ENCODE measurements at regions of chr1 and their contacts with region 1.

Region 1: DNA sequence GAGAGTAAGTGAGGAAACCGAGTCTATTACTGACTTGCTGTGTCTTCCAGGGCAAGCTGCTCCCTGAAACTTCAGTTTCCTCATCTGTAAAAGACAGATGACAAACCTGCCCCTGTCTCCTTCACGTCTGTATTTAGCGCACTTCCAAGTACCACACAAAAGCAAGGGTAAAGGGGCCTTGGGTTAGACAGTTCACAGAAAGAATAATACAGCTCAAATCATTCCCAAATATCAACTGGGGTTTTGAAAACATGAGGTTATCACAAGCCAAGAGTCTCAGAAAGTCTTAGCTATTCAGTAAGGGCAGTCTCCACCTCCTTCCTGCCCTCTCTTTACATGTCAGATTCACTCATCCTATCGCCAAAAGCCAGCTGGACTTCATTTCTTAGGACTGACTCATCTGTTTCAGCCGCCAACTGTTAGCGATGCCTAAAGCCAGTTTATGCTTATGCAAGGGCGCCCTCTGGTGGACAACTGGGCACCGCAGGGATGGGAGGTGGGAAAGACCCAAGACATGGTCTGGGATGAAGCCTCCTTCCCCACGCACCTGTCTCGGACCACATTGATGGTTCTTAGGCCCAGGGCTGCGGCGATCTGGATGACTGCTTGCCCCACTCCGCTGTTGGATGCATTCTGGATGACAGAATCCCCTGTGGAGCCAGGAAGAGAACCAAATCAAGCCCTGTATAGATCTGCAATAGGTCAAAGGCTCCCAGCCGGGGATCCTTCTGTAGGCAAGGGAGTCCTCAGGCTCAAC is 21.1 kb upstream of the SRSF4 start:
- DNase-seq: peak; percentile 86 to 92
- ATAC-seq: peak; percentile 92 to 98 (median 96)
- H3K4me3 ChIP-seq: no peak overlapping the region
- H3K4me3 Mint-ChIP-seq: no peak overlapping the region
- H3K27ac ChIP-seq: no peak overlapping the region
- H3K27ac Mint-ChIP-seq: peak overlapping the region in 1 of 2 donors; percentile 31
- H3K4me1 ChIP-seq: no peaks in the 10 kb centered on the region
- H3K4me1 Mint-ChIP-seq: peaks cover 0 to 4% of the 10 kb centered on the region in 2 donors
- H3K27me3 ChIP-seq: no peaks in the 10 kb centered on the region
- H3K27me3 Mint-ChIP-seq: no peaks in the 10 kb centered on the region
- CTCF ChIP-seq: peak; percentile 97

Region 2: GRCh38 chr1:28779751-28780408 is 422.9 kb before region 1 on chr1:
- intact Hi-C with region 1: loop called (anchors 1 kb)
- DNase-seq: no peak
- ATAC-seq: no peak
- H3K4me3 ChIP-seq: no peak overlapping the region
- H3K4me3 Mint-ChIP-seq: no peak overlapping the region
- H3K27ac ChIP-seq: no peak overlapping the region
- H3K27ac Mint-ChIP-seq: no peak overlapping the region
- H3K4me1 ChIP-seq: peaks cover 7% of the 10 kb centered on the region
- H3K4me1 Mint-ChIP-seq: peaks cover 9 to 10% of the 10 kb centered on the region in 2 donors
- H3K27me3 ChIP-seq: no peaks in the 10 kb centered on the region
- H3K27me3 Mint-ChIP-seq: no peaks in the 10 kb centered on the region
- CTCF ChIP-seq: no peak

Region 3: GRCh38 chr1:29033829-29034466 is 168.8 kb before region 1 on chr1:
- intact Hi-C with region 1: loop called (anchors 2 kb)
- DNase-seq: peak in 1 of 2 donors; percentile 65
- ATAC-seq: peak; percentile 69 to 85 (median 69)
- H3K4me3 ChIP-seq: no peak overlapping the region
- H3K4me3 Mint-ChIP-seq: no peak overlapping the region
- H3K27ac ChIP-seq: no peak overlapping the region
- H3K27ac Mint-ChIP-seq: peak overlapping the region; percentile 60 to 77
- H3K4me1 ChIP-seq: no peaks in the 10 kb centered on the region
- H3K4me1 Mint-ChIP-seq: peaks cover 4 to 7% of the 10 kb centered on the region in 2 donors
- H3K27me3 ChIP-seq: no peaks in the 10 kb centered on the region
- H3K27me3 Mint-ChIP-seq: no peaks in the 10 kb centered on the region
- CTCF ChIP-seq: peak; percentile 78

Region 4: GRCh38 chr1:29124366-29125236 is 78.2 kb before region 1 on chr1:
- intact Hi-C with region 1: loop called (anchors 2 kb)
- DNase-seq: peak; percentile 62 to 65
- ATAC-seq: peak; percentile 64 to 67 (median 66)
- H3K4me3 ChIP-seq: peak overlapping the region; percentile 42
- H3K4me3 Mint-ChIP-seq: peak overlapping the region; percentile 92
- H3K27ac ChIP-seq: no peak overlapping the region
- H3K27ac Mint-ChIP-seq: peak overlapping the region in 1 of 2 donors; percentile 76
- H3K4me1 ChIP-seq: peaks cover 38% of the 10 kb centered on the region
- H3K4me1 Mint-ChIP-seq: peaks cover 8 to 18% of the 10 kb centered on the region in 2 donors
- H3K27me3 ChIP-seq: peaks cover 23% of the 10 kb centered on the region
- H3K27me3 Mint-ChIP-seq: peaks cover 8 to 15% of the 10 kb centered on the region in 2 donors
- CTCF ChIP-seq: no peak

Region 5: DNA sequence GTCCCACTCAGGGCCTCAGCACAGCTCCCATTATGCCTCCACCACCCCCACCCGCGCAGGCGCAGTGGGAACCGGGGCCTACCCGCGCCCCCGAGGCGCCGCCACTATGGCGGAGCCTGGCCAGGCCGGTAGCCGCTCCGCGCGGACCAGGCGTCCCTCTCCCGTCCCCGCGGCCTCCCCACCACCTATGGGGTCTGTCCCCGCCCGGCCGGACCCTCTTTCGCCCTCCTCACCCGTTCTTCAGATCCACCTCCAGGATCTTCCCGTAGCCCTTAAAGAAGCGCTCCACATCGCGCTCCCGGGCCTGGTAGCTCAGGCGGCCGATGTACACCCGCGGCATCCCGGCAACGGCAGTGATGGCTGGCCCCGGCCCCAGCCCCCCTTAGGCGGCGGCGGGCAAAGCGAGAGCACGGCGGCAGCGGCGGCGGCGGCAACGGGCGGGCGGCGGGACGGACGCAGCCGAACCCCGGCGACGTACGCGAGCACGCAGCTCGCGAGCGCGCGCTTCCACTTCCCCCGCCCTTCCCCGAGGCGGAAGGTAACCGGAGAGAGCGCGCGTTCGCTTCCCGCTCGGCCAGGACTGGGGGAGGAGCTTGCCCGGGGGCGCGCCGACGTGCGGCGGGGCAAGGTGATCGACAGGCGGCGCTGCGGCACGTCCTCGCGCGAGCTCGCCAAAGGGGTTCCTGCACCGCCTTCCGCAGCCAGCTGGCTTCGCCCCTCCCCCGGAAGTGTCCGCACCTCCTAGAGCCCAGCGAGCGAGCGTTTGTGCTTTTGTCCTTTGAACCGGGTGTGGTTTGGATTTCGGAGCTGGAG is 21.1 kb before region 1 on chr1 and contains the start of gene SRSF4:
- intact Hi-C with region 1: loop called (anchors 2 kb)
- DNase-seq: peak; percentile 99
- ATAC-seq: peak; percentile 91 to 98 (median 91)
- H3K4me3 ChIP-seq: peak within 1 kb of the TSS; percentile 100
- H3K4me3 Mint-ChIP-seq: peak within 1 kb of the TSS; percentile 93
- H3K27ac ChIP-seq: peak within 1 kb of the TSS; percentile 100
- H3K27ac Mint-ChIP-seq: peak within 1 kb of the TSS; percentile 94 to 95
- H3K4me1 ChIP-seq: peaks cover 30% of the 10 kb centered on the region
- H3K4me1 Mint-ChIP-seq: peaks cover 38 to 42% of the 10 kb centered on the region in 2 donors
- H3K27me3 ChIP-seq: no peaks in the 10 kb centered on the region
- H3K27me3 Mint-ChIP-seq: no peaks in the 10 kb centered on the region
- CTCF ChIP-seq: peak; percentile 71
- total RNA-seq, gene SRSF4: 90.2 to 114 (median 101) TPM